ENCODE measurements at regions of chr12 and their contacts with region 1.

Region 1: GRCh38 chr12:57836442-57837375 is 9.8 kb downstream of the CTDSP2 start:
- DNase-seq: peak; percentile 68
- ATAC-seq: peak; percentile 51
- H3K4me3 Mint-ChIP-seq: peak overlapping the region; percentile 49
- H3K27ac Mint-ChIP-seq: peak overlapping the region; percentile 85
- H3K4me1 Mint-ChIP-seq: peaks cover 94% of the 10 kb centered on the region
- H3K27me3 Mint-ChIP-seq: no peaks in the 10 kb centered on the region

Region 2: GRCh38 chr12:57865090-57865751 is 28.5 kb after region 1 on chr12:
- CTCF ChIA-PET with region 1: interaction called, 9 read pairs
- POLR2A ChIA-PET with region 1: interaction called, 3 read pairs
- intact Hi-C with region 1: loop called in 1 of 2 experiments (anchors 2 kb)
- DNase-seq: peak; percentile 84
- ATAC-seq: peak; percentile 96
- H3K4me3 Mint-ChIP-seq: peak overlapping the region; percentile 66
- H3K27ac Mint-ChIP-seq: peak overlapping the region; percentile 74
- H3K4me1 Mint-ChIP-seq: peaks cover 7% of the 10 kb centered on the region
- H3K27me3 Mint-ChIP-seq: peaks cover 2% of the 10 kb centered on the region

Region 3: GRCh38 chr12:58321414-58321813 is 484.7 kb after region 1 on chr12:
- CTCF ChIA-PET with region 1: no interaction called
- POLR2A ChIA-PET with region 1: no interaction called
- intact Hi-C with region 1: no loop called
- DNase-seq: no peak
- ATAC-seq: no peak
- H3K4me3 Mint-ChIP-seq: no peak overlapping the region
- H3K27ac Mint-ChIP-seq: no peak overlapping the region
- H3K4me1 Mint-ChIP-seq: no peaks in the 10 kb centered on the region
- H3K27me3 Mint-ChIP-seq: peaks cover 3% of the 10 kb centered on the region